ENCODE measurements at regions of chr15 and their contacts with region 1.

Region 1: GRCh38 chr15:52078876-52079700 is 33.5 kb downstream of the BCL2L10 start:
- DNase-seq: peak; percentile 62 to 90 (median 84)
- ATAC-seq: peak; percentile 67
- H3K4me3 ChIP-seq: no peak overlapping the region
- H3K4me3 Mint-ChIP-seq: no peak overlapping the region
- H3K27ac ChIP-seq: no peak overlapping the region
- H3K27ac Mint-ChIP-seq: no peak overlapping the region
- H3K4me1 ChIP-seq: no peaks in the 10 kb centered on the region
- H3K4me1 Mint-ChIP-seq: peaks cover 20% of the 10 kb centered on the region
- H3K27me3 ChIP-seq: no peaks in the 10 kb centered on the region
- H3K27me3 Mint-ChIP-seq: no peaks in the 10 kb centered on the region
- CTCF ChIP-seq: peak; percentile 87

Region 2: GRCh38 chr15:51888593-51889195 is 190.4 kb before region 1 on chr15:
- CTCF ChIA-PET with region 1: interaction called, 10 read pairs
- POLR2A ChIA-PET with region 1: no interaction called
- intact Hi-C with region 1: loop called in 1 of 2 experiments (anchors 5 kb)
- DNase-seq: peak in 2 of 9 experiments; percentile 20 to 41
- ATAC-seq: no peak
- H3K4me3 ChIP-seq: no peak overlapping the region
- H3K4me3 Mint-ChIP-seq: no peak overlapping the region
- H3K27ac ChIP-seq: no peak overlapping the region
- H3K27ac Mint-ChIP-seq: peak overlapping the region; percentile 21
- H3K4me1 ChIP-seq: no peaks in the 10 kb centered on the region
- H3K4me1 Mint-ChIP-seq: peaks cover 10% of the 10 kb centered on the region
- H3K27me3 ChIP-seq: no peaks in the 10 kb centered on the region
- H3K27me3 Mint-ChIP-seq: no peaks in the 10 kb centered on the region
- CTCF ChIP-seq: peak; percentile 96

Region 3: DNA sequence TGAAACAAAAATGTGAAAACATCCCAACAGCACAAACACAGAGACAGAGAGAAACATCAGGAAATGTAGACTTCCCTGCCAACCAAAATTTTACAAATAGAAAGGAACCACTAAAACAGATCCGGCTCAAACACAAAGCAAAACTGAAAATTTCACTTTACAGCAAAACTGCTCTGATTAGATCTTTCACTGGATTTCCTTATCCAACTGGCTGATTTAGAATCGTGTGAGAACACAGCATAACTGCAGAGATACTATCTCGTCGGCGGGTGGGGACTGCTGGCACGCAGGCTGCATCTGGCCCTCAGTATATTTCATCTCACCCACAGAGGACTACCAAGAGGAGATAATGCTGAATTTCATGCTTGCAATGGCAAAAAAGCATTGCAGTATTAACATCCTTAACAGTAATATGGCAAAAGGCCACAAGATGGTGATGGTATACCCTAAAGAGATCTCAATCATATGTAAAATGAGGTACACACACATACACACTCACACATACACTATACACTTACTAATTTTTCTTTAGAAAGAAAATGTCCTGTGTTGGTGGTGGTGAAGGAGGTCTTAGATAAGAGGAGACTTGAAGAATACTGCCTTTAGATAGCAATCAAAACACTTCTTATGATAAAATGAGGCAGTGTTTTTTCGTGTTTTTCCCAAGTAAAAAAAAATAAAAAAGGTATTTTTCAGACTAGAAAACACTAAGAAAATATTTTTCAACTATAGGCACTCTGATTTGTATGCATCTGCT is 96.9 kb before region 1 on chr15:
- CTCF ChIA-PET with region 1: interaction called, 54 read pairs
- POLR2A ChIA-PET with region 1: interaction called, 4 read pairs
- intact Hi-C with region 1: loop called (anchors 1 kb)
- DNase-seq: peak in 7 of 9 experiments; percentile 5 to 81 (median 32)
- ATAC-seq: peak; percentile 96
- H3K4me3 ChIP-seq: no peak overlapping the region
- H3K4me3 Mint-ChIP-seq: peak overlapping the region; percentile 68
- H3K27ac ChIP-seq: no peak overlapping the region
- H3K27ac Mint-ChIP-seq: peak overlapping the region; percentile 25
- H3K4me1 ChIP-seq: peaks cover 8% of the 10 kb centered on the region
- H3K4me1 Mint-ChIP-seq: peaks cover 10% of the 10 kb centered on the region
- H3K27me3 ChIP-seq: peaks cover 0 to 2% of the 10 kb centered on the region in 2 experiments
- H3K27me3 Mint-ChIP-seq: no peaks in the 10 kb centered on the region
- CTCF ChIP-seq: peak; percentile 88

Region 4: GRCh38 chr15:52039925-52040781 is 38.9 kb before region 1 on chr15:
- CTCF ChIA-PET with region 1: interaction called, 24 read pairs
- POLR2A ChIA-PET with region 1: interaction called, 4 read pairs
- intact Hi-C with region 1: no loop called
- DNase-seq: no peak
- ATAC-seq: no peak
- H3K4me3 ChIP-seq: no peak overlapping the region
- H3K4me3 Mint-ChIP-seq: no peak overlapping the region
- H3K27ac ChIP-seq: peak overlapping the region in 1 of 2 experiments; percentile 24
- H3K27ac Mint-ChIP-seq: peak overlapping the region; percentile 69
- H3K4me1 ChIP-seq: peaks cover 31% of the 10 kb centered on the region
- H3K4me1 Mint-ChIP-seq: peaks cover 65% of the 10 kb centered on the region
- H3K27me3 ChIP-seq: no peaks in the 10 kb centered on the region
- H3K27me3 Mint-ChIP-seq: no peaks in the 10 kb centered on the region
- CTCF ChIP-seq: no peak

Region 5: DNA sequence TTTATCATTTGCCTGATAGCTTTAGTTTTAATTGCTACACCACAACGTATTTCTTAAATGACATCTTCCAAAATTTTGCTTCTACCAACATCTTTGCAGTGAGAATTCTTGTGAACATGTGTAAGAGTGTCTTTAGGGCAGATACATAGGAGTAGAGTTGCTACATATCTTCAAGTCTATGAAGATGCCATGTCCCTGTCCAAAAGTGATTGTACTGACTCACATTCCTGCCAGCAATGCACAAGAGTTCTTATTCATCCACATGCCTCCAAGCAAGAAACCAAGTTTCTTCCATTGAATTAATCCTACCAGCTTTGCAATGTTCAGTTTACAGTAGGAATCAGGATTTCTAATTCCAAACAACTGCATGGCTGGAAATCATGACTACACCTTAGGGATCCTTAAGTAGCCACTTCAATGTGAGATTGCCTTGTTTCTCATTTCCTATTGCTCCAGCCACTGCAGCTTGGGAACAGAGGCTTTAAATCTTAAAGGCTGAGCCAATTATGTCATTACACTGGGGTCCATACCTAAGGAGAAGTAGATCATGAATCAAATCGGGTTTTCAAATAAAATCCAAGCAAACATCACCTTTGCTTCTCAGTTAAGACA is 11.0 kb before region 1 on chr15:
- CTCF ChIA-PET with region 1: interaction called, 39 read pairs
- POLR2A ChIA-PET with region 1: no interaction called
- intact Hi-C with region 1: no loop called
- DNase-seq: no peak
- ATAC-seq: no peak
- H3K4me3 ChIP-seq: no peak overlapping the region
- H3K4me3 Mint-ChIP-seq: no peak overlapping the region
- H3K27ac ChIP-seq: no peak overlapping the region
- H3K27ac Mint-ChIP-seq: no peak overlapping the region
- H3K4me1 ChIP-seq: no peaks in the 10 kb centered on the region
- H3K4me1 Mint-ChIP-seq: peaks cover 12% of the 10 kb centered on the region
- H3K27me3 ChIP-seq: no peaks in the 10 kb centered on the region
- H3K27me3 Mint-ChIP-seq: no peaks in the 10 kb centered on the region
- CTCF ChIP-seq: no peak

Region 6: GRCh38 chr15:52227456-52227855 is 148.4 kb after region 1 on chr15:
- CTCF ChIA-PET with region 1: interaction called, 8 read pairs
- POLR2A ChIA-PET with region 1: no interaction called
- intact Hi-C with region 1: loop called (anchors 1 to 5 kb)
- DNase-seq: peak; percentile 37 to 88 (median 67)
- ATAC-seq: peak; percentile 100
- H3K4me3 ChIP-seq: no peak overlapping the region
- H3K4me3 Mint-ChIP-seq: no peak overlapping the region
- H3K27ac ChIP-seq: no peak overlapping the region
- H3K27ac Mint-ChIP-seq: no peak overlapping the region
- H3K4me1 ChIP-seq: peaks cover 4% of the 10 kb centered on the region
- H3K4me1 Mint-ChIP-seq: peaks cover 20% of the 10 kb centered on the region
- H3K27me3 ChIP-seq: no peaks in the 10 kb centered on the region
- H3K27me3 Mint-ChIP-seq: no peaks in the 10 kb centered on the region
- CTCF ChIP-seq: peak; percentile 72

Measured in CD8-positive, alpha-beta T cell (primary cell).